Caco-2 (cell line): ENCODE measurements at regions of chr11 and their contacts with region 1.

Region 1: DNA sequence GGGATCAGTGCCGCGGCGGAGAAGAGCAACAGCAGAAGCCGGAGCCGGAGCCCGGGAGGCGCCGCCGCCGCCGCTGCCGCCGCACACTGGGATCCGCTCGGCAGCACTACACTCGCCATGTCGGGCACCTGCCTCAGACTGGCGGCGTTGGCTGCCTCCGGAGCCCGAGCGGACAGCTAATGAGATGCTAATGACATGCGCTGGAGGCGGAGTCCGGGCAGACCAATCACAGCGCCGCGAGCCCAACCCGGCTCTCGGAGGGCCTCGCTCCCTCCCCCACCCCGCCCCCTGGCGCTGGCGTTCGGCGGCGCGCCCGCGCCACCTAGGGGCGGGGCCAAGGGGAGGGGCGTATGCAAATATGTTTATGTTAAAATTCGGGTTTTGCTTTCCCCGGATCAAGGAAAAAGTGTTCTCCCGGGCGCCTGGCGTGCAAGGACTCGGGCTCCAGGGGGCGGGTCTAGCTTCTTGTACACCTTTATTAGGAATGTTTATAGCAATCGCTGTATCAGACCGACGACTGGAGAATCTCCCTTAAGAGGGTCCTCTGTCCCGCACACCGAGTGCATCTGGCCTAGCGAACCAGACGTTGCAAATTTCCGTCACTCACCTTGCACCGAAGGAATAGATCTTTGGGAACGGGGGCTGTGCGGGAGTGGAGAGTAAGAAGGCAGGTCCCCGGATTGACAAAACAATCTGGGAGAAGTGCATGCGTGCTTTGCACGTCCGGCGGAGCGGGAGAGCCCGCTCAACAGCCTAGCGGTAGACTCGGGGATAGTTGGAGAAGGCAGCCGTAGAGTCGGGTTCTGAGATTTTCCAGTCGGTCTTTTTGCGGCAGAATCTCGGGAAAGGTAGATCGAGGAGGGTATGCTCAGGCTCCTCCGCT is at the start of gene CADM1:
- DNase-seq: peak; percentile 99 to 100
- H3K4me3 ChIP-seq: peak within 1 kb of the TSS; percentile 76
- H3K4me3 Mint-ChIP-seq: no peak within 1 kb of the TSS
- H3K27ac Mint-ChIP-seq: peak within 1 kb of the TSS; percentile 90
- H3K4me1 ChIP-seq: peaks cover 24% of the 10 kb centered on the region
- H3K4me1 Mint-ChIP-seq: no peaks in the 10 kb centered on the region
- H3K27me3 ChIP-seq: no peaks in the 10 kb centered on the region; the same call in 1 of the 2 replicates
- H3K27me3 Mint-ChIP-seq: no peaks in the 10 kb centered on the region
- CTCF ChIP-seq: peak; percentile 73 to 90
- total RNA-seq, gene CADM1: 440 and 534 TPM in 2 replicates

Region 2: GRCh38 chr11:114784216-114784615 is 720.3 kb before region 1 on chr11:
- CTCF ChIA-PET with region 1: interaction called, 3 read pairs
- POLR2A ChIA-PET with region 1: no interaction called
- intact Hi-C with region 1: loop called (anchors 5 kb)
- DNase-seq: no peak
- H3K4me3 ChIP-seq: no peak overlapping the region
- H3K4me3 Mint-ChIP-seq: peak overlapping the region; percentile 18
- H3K27ac Mint-ChIP-seq: peak overlapping the region; percentile 5
- H3K4me1 ChIP-seq: peaks cover 28% of the 10 kb centered on the region
- H3K4me1 Mint-ChIP-seq: peaks cover 30% of the 10 kb centered on the region
- H3K27me3 ChIP-seq: no peaks in the 10 kb centered on the region
- H3K27me3 Mint-ChIP-seq: no peaks in the 10 kb centered on the region
- CTCF ChIP-seq: no peak

Region 3: DNA sequence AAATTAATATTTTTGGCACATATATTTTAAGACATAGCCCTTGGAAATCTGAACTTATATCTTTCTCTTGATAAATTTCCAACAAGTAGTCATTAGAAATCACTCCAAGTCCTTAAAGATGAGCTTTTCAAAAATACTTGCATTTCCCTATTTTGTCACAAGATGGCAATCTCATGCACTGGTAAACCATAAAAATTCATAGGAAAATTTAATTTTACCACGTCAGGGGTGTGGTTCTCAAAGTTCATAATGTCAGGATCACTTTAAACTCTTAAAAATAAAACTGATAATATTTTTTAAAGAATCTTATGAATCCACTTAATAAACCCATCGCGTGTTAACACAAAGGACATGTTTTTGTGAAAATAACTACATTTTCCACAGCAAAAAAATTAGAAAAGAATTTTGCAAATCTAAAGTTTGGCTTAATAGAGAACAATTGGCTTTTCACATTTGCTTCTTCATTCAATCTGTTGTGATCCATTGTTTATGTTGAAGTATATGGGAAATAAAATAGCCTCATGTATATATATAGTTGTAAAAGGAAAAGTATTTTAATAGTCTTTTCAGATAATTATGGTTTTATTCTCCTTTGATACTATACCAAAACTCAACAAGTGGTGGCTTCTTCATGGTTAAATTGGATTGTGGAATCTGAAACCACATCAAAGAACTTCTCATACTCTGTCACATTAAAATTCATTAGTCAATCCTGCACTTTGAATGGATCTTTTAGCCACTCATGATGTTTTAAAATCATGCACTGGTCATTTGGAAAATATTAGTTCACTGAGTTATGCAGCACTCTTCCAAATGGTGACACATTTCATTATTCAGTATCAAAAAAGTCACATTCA is 169.4 kb before region 1 on chr11:
- CTCF ChIA-PET with region 1: interaction called, 26 read pairs
- POLR2A ChIA-PET with region 1: interaction called, 4 read pairs
- intact Hi-C with region 1: loop called (anchors 1 kb)
- DNase-seq: peak in 1 of 2 experiments; percentile 56
- H3K4me3 ChIP-seq: no peak overlapping the region
- H3K4me3 Mint-ChIP-seq: no peak overlapping the region
- H3K27ac Mint-ChIP-seq: no peak overlapping the region
- H3K4me1 ChIP-seq: peaks cover 21% of the 10 kb centered on the region
- H3K4me1 Mint-ChIP-seq: peaks cover 6% of the 10 kb centered on the region
- H3K27me3 ChIP-seq: no peaks in the 10 kb centered on the region
- H3K27me3 Mint-ChIP-seq: no peaks in the 10 kb centered on the region
- CTCF ChIP-seq: peak; percentile 85

Region 4: DNA sequence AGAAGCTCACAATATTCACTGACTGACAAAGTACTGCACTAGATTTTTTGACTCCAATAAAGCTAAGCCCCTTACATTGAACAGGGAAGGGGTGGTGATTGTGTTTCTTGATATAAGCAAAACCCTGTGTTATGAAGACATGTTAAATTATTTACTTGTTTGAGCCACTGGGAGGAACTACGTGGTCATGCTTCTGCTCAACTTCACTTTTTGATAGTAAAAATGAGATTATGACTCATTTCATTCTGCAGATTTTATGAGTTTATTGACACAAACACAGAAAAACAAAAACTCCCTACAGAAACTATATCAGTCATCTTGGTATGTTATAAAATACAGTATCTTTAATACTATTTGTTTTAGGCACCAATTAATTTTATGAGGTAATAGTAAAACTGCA is 125.0 kb before region 1 on chr11:
- CTCF ChIA-PET with region 1: no interaction called
- POLR2A ChIA-PET with region 1: no interaction called
- intact Hi-C with region 1: no loop called
- DNase-seq: no peak
- H3K4me3 ChIP-seq: no peak overlapping the region
- H3K4me3 Mint-ChIP-seq: no peak overlapping the region
- H3K27ac Mint-ChIP-seq: no peak overlapping the region
- H3K4me1 ChIP-seq: no peaks in the 10 kb centered on the region
- H3K4me1 Mint-ChIP-seq: peaks cover 14% of the 10 kb centered on the region
- H3K27me3 ChIP-seq: no peaks in the 10 kb centered on the region
- H3K27me3 Mint-ChIP-seq: no peaks in the 10 kb centered on the region
- CTCF ChIP-seq: no peak

Region 5: DNA sequence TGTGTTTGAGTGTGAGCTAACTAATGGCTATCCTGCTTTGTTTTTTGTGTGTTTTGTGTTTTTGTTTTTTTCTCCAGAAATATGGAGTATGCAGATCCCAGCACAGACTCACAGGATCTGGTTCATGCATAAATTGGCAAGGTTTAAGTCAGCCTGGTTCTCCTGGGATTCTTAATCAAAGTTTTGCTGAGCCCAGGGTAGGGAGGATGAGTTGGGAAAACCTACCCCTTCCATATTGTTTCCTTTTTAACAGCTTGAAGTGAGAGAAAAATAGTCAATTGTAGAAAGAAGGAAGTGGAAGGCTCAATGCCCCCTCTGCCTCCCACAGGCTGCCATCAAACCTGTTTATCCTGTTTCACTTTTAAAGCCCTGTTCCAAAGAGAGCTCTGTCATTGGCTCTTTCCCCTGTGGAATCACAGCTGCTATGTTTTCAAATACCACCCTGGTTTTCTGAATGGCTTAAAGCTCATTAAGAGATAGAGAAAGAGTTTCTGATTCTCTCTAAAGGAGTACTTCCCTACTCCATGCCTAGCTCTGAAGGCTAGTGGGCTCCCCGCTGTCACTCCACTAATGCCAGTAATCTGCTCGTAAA is 23.1 kb after region 1 on chr11:
- CTCF ChIA-PET with region 1: interaction called, 11 read pairs
- POLR2A ChIA-PET with region 1: interaction called, 5 read pairs
- intact Hi-C with region 1: loop called (anchors 1 kb)
- DNase-seq: peak; percentile 67 to 74
- H3K4me3 ChIP-seq: no peak overlapping the region
- H3K4me3 Mint-ChIP-seq: no peak overlapping the region
- H3K27ac Mint-ChIP-seq: peak overlapping the region; percentile 46
- H3K4me1 ChIP-seq: peaks cover 28% of the 10 kb centered on the region
- H3K4me1 Mint-ChIP-seq: peaks cover 47% of the 10 kb centered on the region
- H3K27me3 ChIP-seq: no peaks in the 10 kb centered on the region
- H3K27me3 Mint-ChIP-seq: no peaks in the 10 kb centered on the region
- CTCF ChIP-seq: no peak

Region 6: DNA sequence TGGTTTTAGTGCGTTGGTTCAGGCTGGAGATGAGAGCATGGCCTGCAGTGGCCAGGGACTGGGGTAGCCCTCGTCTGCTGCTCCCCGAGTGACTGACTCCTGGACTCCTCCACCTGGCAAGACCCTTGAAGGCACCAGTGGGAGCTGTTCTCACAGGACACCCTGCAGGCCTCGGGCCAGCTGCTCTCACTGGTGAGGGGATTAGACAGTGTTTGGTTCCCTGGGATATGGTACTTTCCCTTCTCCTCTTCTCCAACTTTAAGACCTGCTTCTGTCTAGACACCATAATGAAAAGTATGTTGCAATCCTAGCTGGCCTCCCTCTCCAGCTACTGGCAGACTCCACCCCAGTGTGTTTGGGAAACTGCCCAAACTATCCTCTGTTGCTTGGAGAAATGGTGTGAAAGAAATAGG is 168.5 kb after region 1 on chr11:
- CTCF ChIA-PET with region 1: no interaction called
- POLR2A ChIA-PET with region 1: no interaction called
- intact Hi-C with region 1: loop called (anchors 10 kb)
- DNase-seq: no peak
- H3K4me3 ChIP-seq: no peak overlapping the region
- H3K4me3 Mint-ChIP-seq: no peak overlapping the region
- H3K27ac Mint-ChIP-seq: no peak overlapping the region
- H3K4me1 ChIP-seq: no peaks in the 10 kb centered on the region
- H3K4me1 Mint-ChIP-seq: peaks cover 6% of the 10 kb centered on the region
- H3K27me3 ChIP-seq: no peaks in the 10 kb centered on the region
- H3K27me3 Mint-ChIP-seq: peaks cover 2% of the 10 kb centered on the region
- CTCF ChIP-seq: no peak

Region 7: DNA sequence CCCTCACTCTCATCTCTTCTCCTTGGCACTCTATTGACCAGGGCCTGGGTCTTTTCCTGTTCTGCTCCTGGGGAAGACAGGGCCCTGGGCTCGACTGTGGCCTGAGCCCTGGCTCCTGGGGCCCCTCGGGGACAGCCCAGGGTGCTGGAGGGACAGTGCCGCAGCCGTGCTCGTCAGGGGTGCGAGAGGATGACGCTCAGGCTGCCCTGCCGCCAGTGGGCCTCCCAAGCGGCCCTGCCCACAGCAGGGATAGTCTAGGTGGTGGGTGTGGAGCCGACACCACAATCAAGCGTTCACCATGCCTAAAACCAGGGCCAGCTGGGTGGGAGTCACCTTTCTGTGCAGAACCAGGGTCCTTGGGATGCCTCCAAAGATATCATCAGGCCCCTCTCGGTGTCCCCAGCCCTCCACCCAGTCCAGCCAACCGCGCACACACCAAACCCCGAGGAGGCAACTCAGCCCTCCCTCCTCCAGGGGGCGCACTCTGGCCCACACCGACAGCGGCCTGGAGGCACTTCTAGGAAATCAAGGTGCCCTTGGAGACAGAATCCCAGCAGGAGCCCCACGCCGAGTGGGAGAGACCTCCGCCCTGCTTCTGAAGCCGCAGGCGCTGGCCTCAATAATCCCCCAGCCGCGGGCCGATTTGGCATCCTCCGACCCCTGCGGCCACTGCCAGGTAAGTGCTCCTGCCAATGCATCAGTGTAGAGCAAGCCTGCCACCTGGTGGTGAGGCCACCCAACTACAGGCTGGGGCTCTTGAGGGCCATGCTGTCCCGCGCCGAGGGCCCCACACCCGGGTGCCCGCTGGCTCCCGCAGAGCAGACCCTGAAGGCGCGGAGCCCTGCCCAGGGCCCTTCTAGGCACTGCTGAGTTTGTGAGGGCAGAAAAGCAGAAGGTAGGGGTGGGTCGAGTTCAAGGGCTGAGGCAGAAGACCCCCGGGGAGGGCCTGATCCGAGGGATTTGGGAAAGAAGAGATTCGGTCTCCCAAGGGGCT is 771.8 kb after region 1 on chr11:
- CTCF ChIA-PET with region 1: no interaction called
- POLR2A ChIA-PET with region 1: no interaction called
- intact Hi-C with region 1: loop called (anchors 10 kb)
- DNase-seq: peak; percentile 95 to 97
- H3K4me3 ChIP-seq: peak overlapping the region; percentile 29
- H3K4me3 Mint-ChIP-seq: peak overlapping the region; percentile 64
- H3K27ac Mint-ChIP-seq: peak overlapping the region; percentile 27
- H3K4me1 ChIP-seq: peaks cover 23% of the 10 kb centered on the region
- H3K4me1 Mint-ChIP-seq: peaks cover 18% of the 10 kb centered on the region
- H3K27me3 ChIP-seq: no peaks in the 10 kb centered on the region
- H3K27me3 Mint-ChIP-seq: no peaks in the 10 kb centered on the region
- CTCF ChIP-seq: peak; percentile 91 to 100